Aorta (tissue), 5 donors: ENCODE measurements at regions of chr10 and their contacts with region 1.

Region 1: DNA sequence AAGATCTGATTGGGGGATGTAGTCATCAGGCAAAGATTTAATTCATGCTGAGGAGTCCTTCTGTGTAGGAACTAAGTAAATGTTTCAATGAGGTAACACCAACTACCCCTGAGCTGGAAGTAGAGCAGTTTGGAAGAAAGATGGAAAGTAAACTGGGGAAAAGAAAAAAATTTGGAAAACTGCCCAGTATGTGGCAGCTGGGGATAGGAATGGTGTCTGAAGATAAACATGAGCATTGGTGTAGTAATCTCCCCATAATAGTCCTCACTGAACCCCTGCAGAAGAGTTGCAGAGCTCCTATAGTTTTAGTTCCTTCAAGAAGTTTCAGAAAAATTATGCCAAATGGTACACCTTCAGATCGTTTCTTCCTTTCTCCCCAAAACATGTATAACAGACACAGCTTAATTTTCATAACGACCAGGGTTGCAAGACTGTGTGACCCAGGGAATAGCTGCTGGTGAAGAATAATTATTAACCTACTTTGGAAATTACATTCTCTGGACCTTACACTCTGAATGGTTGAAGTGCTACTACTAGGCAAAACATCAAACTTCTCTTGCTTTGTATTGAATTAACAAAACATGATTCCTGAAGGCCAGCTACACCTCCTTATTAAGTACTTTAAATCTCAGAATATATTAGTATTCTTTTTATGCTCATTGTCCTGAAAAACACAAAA is 446.4 kb upstream of the NRG3 start:
- DNase-seq: no peak
- ATAC-seq: no peak
- H3K4me3 ChIP-seq: no peak overlapping the region
- H3K27ac ChIP-seq: no peak overlapping the region
- H3K4me1 ChIP-seq: no peaks in the 10 kb centered on the region
- H3K27me3 ChIP-seq: no peaks in the 10 kb centered on the region

Region 2: GRCh38 chr10:81472927-81473470 is 44.4 kb after region 1 on chr10:
- intact Hi-C with region 1: no loop called
- DNase-seq: peak in 1 of 2 donors; percentile 42
- ATAC-seq: peak; percentile 56
- H3K4me3 ChIP-seq: no peak overlapping the region
- H3K27ac ChIP-seq: no peak overlapping the region
- H3K4me1 ChIP-seq: no peaks in the 10 kb centered on the region
- H3K27me3 ChIP-seq: no peaks in the 10 kb centered on the region

Region 3: DNA sequence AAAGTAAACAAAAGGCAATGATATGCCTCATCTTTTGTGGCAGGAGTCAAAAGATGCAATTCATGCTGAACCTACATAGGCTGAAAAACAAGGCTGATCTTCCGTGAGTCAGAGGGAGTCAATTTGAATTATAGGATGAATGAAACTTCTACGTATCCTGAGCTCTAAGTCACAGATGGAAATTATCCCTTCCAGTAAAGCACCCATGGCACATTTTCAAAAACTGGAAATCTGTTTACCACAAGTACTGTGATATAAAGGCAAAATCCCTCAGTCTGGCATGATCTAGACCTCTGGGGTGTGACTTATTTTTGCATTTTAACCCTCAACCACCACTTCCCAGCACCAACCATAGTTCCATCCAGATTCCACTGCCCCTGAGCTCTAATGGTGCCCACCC is 516.0 kb after region 1 on chr10:
- intact Hi-C with region 1: loop called in 1 of 2 experiments (anchors 10 kb)
- DNase-seq: no peak
- ATAC-seq: no peak
- H3K4me3 ChIP-seq: no peak overlapping the region
- H3K27ac ChIP-seq: no peak overlapping the region
- H3K4me1 ChIP-seq: no peaks in the 10 kb centered on the region
- H3K27me3 ChIP-seq: no peaks in the 10 kb centered on the region